ENCODE measurements at regions of chr1 and their contacts with region 1.

Region 1: DNA sequence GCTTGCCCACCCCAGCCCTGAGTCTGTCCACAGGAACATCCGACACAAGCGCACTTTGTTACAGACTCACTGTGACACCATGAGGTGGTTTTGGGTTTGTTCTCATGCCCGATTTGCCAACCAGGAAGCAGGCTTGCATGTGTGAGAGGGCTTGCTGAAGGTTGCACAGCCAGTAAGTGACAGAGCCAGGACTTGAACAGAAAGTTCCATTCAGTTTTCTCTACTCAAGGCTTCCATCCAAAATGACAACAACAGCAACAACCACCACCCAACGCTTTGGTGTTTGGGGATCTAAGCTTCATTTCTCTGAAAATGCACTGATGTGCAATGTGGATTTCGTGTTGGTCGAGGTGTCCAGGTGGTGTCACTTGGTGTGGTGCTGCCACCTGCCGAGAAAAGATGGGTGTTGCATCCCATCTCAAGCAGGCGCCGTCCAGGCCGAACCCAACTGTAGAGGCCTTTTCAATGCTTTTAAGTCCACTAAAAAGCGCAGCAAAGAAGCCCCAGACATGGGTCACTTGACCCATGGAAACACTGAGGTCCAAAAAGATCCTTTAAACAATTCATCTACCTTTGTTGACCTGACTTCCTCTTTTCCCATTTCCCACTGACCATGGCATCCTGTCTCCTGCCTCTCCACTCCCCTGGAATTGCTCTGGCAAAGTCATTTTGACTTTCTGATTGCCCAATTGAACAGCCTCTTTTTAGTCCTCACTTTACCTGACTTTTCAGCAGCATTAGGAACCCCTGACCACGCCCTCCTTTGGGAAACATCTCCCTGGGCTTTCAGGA is 12.2 kb downstream of the CITED4 start:
- DNase-seq: peak; percentile 46
- H3K4me3 ChIP-seq: no peak overlapping the region
- H3K27ac ChIP-seq: no peak overlapping the region
- H3K4me1 ChIP-seq: peaks cover 6% of the 10 kb centered on the region
- H3K27me3 ChIP-seq: no peaks in the 10 kb centered on the region
- CTCF ChIP-seq: peak; percentile 89 to 93

Region 2: GRCh38 chr1:40592107-40592803 is 257.7 kb before region 1 on chr1:
- CTCF ChIA-PET with region 1: interaction called, 11 read pairs
- dilution Hi-C with region 1: loop called (anchors 10 kb)
- in situ Hi-C with region 1: no loop called
- intact Hi-C with region 1: loop called (anchors 1 kb)
- DNase-seq: peak; percentile 75
- H3K4me3 ChIP-seq: no peak overlapping the region
- H3K27ac ChIP-seq: no peak overlapping the region
- H3K4me1 ChIP-seq: peaks cover 17% of the 10 kb centered on the region
- H3K27me3 ChIP-seq: no peaks in the 10 kb centered on the region
- CTCF ChIP-seq: peak; percentile 76

Region 3: GRCh38 chr1:40657046-40657445 is 193.0 kb before region 1 on chr1:
- CTCF ChIA-PET with region 1: no interaction called
- dilution Hi-C with region 1: no loop called
- in situ Hi-C with region 1: no loop called
- intact Hi-C with region 1: no loop called
- DNase-seq: no peak
- H3K4me3 ChIP-seq: no peak overlapping the region
- H3K27ac ChIP-seq: no peak overlapping the region
- H3K4me1 ChIP-seq: peaks cover under 1% of the 10 kb centered on the region
- H3K27me3 ChIP-seq: peaks cover 2% of the 10 kb centered on the region
- CTCF ChIP-seq: no peak

Region 4: DNA sequence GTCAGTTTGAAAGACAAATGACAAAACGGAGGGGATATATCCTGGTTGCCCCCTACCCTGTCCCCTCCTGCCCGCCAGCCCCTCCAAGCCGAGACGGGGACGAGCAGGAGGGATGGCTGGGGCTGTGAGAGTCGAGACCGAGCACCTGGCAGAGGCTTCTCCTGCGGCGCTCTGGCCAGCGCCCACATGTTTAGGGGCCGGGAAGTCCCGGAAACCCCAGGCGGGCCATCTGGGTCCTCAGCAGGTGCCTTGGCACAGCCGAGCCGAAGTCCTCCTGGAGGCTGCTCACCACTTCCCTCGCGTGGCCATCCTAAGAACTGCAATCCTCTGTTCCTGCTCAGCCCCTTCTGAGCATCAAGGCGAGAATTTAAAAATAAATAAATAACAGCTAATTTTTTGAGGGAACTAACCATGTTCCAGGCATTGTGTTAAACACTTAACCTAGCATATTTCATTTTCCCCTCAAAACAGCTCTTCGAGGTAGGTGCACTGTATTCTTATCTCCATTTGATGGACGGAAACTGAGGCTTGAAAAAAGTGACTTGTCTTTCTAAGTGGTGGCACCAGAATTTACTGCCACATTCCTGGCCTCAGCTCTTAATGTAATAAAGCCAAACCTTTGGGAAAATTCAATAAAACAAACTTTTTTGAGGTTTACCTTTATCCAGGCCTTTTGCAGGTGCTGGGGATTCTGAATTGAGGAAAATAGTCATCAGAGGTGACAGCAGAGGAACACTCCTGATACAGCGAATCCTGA is 181.1 kb before region 1 on chr1:
- CTCF ChIA-PET with region 1: no interaction called
- dilution Hi-C with region 1: no loop called
- in situ Hi-C with region 1: loop called in 1 of 2 experiments (anchors 10 kb)
- intact Hi-C with region 1: loop called (anchors 5 kb)
- DNase-seq: peak; percentile 57
- H3K4me3 ChIP-seq: no peak overlapping the region
- H3K27ac ChIP-seq: no peak overlapping the region
- H3K4me1 ChIP-seq: peaks cover 7% of the 10 kb centered on the region
- H3K27me3 ChIP-seq: no peaks in the 10 kb centered on the region
- CTCF ChIP-seq: peak; percentile 94 to 95

Region 5: GRCh38 chr1:40774266-40774998 is 75.6 kb before region 1 on chr1:
- CTCF ChIA-PET with region 1: interaction called, 4 read pairs
- dilution Hi-C with region 1: no loop called
- in situ Hi-C with region 1: no loop called
- intact Hi-C with region 1: loop called (anchors 1 kb)
- DNase-seq: no peak
- H3K4me3 ChIP-seq: no peak overlapping the region
- H3K27ac ChIP-seq: no peak overlapping the region
- H3K4me1 ChIP-seq: peaks cover 13% of the 10 kb centered on the region
- H3K27me3 ChIP-seq: no peaks in the 10 kb centered on the region
- CTCF ChIP-seq: peak; percentile 83 to 84

Region 6: GRCh38 chr1:40919475-40920011 is 69.5 kb after region 1 on chr1:
- CTCF ChIA-PET with region 1: no interaction called
- dilution Hi-C with region 1: loop called (anchors 5 kb)
- in situ Hi-C with region 1: no loop called
- intact Hi-C with region 1: no loop called
- DNase-seq: peak; percentile 60
- H3K4me3 ChIP-seq: no peak overlapping the region
- H3K27ac ChIP-seq: no peak overlapping the region
- H3K4me1 ChIP-seq: peaks cover 14% of the 10 kb centered on the region
- H3K27me3 ChIP-seq: no peaks in the 10 kb centered on the region
- CTCF ChIP-seq: no peak

Region 7: DNA sequence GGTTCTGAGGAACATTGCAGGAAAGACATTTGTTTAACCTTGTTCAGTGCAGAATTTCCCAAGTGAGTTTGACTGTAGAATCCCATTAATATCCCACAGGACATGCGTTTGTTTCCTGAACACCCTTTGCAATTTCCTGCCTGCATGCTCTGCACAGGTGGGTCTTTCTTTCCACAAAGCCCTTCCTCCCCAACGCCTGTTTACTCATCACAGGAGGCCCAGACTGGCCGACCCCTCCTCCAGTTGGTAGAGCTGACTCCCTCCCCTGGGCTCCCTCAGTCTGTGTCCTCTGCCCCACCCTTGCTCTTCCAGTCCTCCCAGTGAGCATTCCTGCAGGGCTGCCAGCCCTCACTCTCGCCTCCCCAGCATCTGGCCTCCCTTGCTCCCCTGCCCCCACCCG is 82.0 kb after region 1 on chr1:
- CTCF ChIA-PET with region 1: no interaction called
- dilution Hi-C with region 1: no loop called
- in situ Hi-C with region 1: no loop called
- intact Hi-C with region 1: no loop called
- DNase-seq: no peak
- H3K4me3 ChIP-seq: no peak overlapping the region
- H3K27ac ChIP-seq: no peak overlapping the region
- H3K4me1 ChIP-seq: no peaks in the 10 kb centered on the region
- H3K27me3 ChIP-seq: no peaks in the 10 kb centered on the region
- CTCF ChIP-seq: no peak

Region 8: GRCh38 chr1:41122851-41123507 is 273.0 kb after region 1 on chr1:
- CTCF ChIA-PET with region 1: no interaction called
- dilution Hi-C with region 1: no loop called
- in situ Hi-C with region 1: no loop called
- intact Hi-C with region 1: loop called (anchors 2 kb)
- DNase-seq: peak; percentile 77
- H3K4me3 ChIP-seq: no peak overlapping the region
- H3K27ac ChIP-seq: no peak overlapping the region
- H3K4me1 ChIP-seq: peaks cover 4% of the 10 kb centered on the region
- H3K27me3 ChIP-seq: no peaks in the 10 kb centered on the region
- CTCF ChIP-seq: peak; percentile 69 to 73

Region 9: DNA sequence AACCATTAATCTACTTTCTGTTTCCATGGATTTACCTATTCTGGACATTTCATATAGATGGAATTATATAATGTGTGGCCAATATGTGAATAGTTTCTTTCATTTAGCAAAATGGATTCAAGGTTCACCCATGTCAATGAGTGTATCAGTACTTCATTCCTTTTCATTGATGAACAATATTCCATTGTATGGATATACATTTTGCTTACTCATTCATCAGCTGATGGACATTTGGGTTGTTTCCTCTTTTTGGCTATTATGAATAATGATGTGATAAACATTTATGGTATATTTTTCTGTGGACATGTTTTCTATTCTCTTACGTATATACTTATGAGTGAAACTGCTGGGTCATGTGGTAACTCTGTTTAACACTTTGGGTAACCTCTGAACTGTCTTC is 294.3 kb after region 1 on chr1:
- CTCF ChIA-PET with region 1: no interaction called
- dilution Hi-C with region 1: no loop called
- in situ Hi-C with region 1: no loop called
- intact Hi-C with region 1: no loop called
- DNase-seq: no peak
- H3K4me3 ChIP-seq: no peak overlapping the region
- H3K27ac ChIP-seq: no peak overlapping the region
- H3K4me1 ChIP-seq: no peaks in the 10 kb centered on the region
- H3K27me3 ChIP-seq: no peaks in the 10 kb centered on the region
- CTCF ChIP-seq: no peak